ENCODE measurements at regions of chr14 and their contacts with region 1.

Region 1: DNA sequence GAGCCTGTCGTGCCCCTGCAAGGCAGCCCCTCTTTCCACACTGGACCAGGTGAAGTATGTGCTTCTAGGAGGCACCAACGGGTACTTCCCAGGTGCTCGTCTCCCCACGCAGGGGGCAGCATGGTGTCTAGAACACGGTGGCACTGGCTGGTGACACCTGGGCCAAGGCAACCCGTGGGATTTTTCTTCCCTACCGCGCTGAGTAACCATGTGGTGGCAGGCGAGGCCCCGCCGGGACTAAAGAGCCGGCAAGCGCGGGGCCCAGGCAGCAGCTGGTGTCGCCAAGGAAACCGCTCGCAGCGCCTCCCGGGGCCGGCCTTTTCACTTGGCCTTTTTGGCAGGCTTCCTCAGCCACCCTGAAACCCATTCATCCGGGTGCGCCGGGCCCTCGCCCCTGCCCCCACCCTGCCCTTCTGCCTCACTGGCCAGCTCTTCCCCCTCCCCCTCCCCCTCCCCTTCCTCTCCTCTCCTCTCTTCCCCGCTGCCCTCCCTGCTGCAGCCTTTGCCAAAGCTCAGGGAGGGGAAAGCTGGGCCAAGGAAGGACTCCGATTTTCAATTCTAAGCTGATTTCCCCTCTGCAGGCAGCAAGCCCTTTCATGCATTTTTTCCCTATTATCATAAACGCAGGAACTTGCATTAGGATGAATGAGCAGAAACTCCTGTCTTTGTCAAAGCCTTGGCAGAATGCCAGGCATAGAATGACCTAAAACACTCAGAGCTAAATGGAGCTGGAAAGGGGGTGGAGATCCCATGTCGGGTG is 81.2 kb downstream of the IRF2BPL start:
- DNase-seq: peak; percentile 52 to 90 (median 80)
- ATAC-seq: peak; percentile 96
- H3K4me3 ChIP-seq: no peak overlapping the region
- H3K4me3 Mint-ChIP-seq: no peak overlapping the region
- H3K27ac ChIP-seq: peak overlapping the region in 1 of 2 experiments; percentile 19
- H3K27ac Mint-ChIP-seq: peak overlapping the region; percentile 60
- H3K4me1 ChIP-seq: peaks cover 13% of the 10 kb centered on the region
- H3K4me1 Mint-ChIP-seq: peaks cover 19% of the 10 kb centered on the region
- H3K27me3 ChIP-seq: no peaks in the 10 kb centered on the region
- H3K27me3 Mint-ChIP-seq: no peaks in the 10 kb centered on the region
- CTCF ChIP-seq: peak; percentile 46

Region 2: GRCh38 chr14:76910371-76910890 is 36.8 kb before region 1 on chr14:
- CTCF ChIA-PET with region 1: interaction called, 18 read pairs
- POLR2A ChIA-PET with region 1: no interaction called
- intact Hi-C with region 1: loop called in 1 of 2 experiments (anchors 2 kb)
- DNase-seq: no peak
- ATAC-seq: no peak
- H3K4me3 ChIP-seq: no peak overlapping the region
- H3K4me3 Mint-ChIP-seq: no peak overlapping the region
- H3K27ac ChIP-seq: no peak overlapping the region
- H3K27ac Mint-ChIP-seq: no peak overlapping the region
- H3K4me1 ChIP-seq: peaks cover 25% of the 10 kb centered on the region
- H3K4me1 Mint-ChIP-seq: peaks cover 25% of the 10 kb centered on the region
- H3K27me3 ChIP-seq: no peaks in the 10 kb centered on the region
- H3K27me3 Mint-ChIP-seq: no peaks in the 10 kb centered on the region
- CTCF ChIP-seq: no peak

Region 3: DNA sequence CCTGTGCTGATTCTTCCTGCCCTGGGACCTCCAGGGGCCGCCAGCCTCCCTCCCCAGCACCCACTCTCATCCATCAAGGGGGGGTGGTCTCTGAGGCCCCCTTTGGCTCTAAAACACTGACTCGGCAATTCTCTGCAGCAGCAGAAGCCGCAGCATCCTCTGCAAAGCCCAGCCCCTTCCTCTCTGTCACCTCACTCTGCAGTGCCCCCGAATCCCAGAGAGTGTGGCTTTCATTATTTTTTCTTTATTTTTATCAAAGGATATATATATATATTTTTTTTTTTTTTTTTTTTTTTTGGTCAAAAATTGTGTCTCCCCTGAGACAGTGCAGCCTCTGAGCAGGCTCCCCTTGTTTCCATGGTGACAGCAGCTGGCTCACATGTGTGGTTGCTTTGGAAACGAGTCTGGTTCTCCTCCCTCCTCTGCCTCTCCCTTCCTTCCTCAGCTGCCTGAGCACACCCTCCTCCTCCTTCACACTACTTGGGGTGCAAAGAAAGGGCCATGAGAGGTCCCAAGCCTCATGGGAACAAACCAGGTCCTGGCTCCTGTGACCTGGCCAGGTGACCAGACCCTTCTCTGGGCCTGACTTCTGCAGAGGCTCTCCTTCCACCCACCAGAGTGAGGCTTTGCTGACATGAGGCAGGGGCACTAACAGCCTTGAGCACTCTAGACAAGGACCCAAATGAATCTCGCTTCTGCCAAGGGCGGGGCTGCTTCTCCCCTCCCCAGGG is 20.6 kb before region 1 on chr14:
- CTCF ChIA-PET with region 1: interaction called, 8 read pairs
- POLR2A ChIA-PET with region 1: interaction called, 5 read pairs
- intact Hi-C with region 1: loop called in 1 of 2 experiments (anchors 2 kb)
- DNase-seq: peak; percentile 20 to 89 (median 65)
- ATAC-seq: peak; percentile 57
- H3K4me3 ChIP-seq: peak overlapping the region in 1 of 2 experiments; percentile 54
- H3K4me3 Mint-ChIP-seq: peak overlapping the region; percentile 75
- H3K27ac ChIP-seq: peak overlapping the region; percentile 25 to 63
- H3K27ac Mint-ChIP-seq: peak overlapping the region; percentile 85
- H3K4me1 ChIP-seq: peaks cover 61% of the 10 kb centered on the region
- H3K4me1 Mint-ChIP-seq: peaks cover 76% of the 10 kb centered on the region
- H3K27me3 ChIP-seq: no peaks in the 10 kb centered on the region
- H3K27me3 Mint-ChIP-seq: no peaks in the 10 kb centered on the region
- CTCF ChIP-seq: no peak

Region 4: GRCh38 chr14:76993752-76994151 is 46.5 kb after region 1 on chr14:
- CTCF ChIA-PET with region 1: no interaction called
- POLR2A ChIA-PET with region 1: no interaction called
- intact Hi-C with region 1: loop called in 1 of 2 experiments (anchors 5 kb)
- DNase-seq: no peak
- ATAC-seq: no peak
- H3K4me3 ChIP-seq: no peak overlapping the region
- H3K4me3 Mint-ChIP-seq: no peak overlapping the region
- H3K27ac ChIP-seq: no peak overlapping the region
- H3K27ac Mint-ChIP-seq: no peak overlapping the region
- H3K4me1 ChIP-seq: no peaks in the 10 kb centered on the region
- H3K4me1 Mint-ChIP-seq: no peaks in the 10 kb centered on the region
- H3K27me3 ChIP-seq: no peaks in the 10 kb centered on the region
- H3K27me3 Mint-ChIP-seq: no peaks in the 10 kb centered on the region
- CTCF ChIP-seq: no peak

Measured in CD8-positive, alpha-beta T cell (primary cell).